Common myeloid progenitor, CD34-positive (primary cell): ENCODE measurements at regions of chr12 and their contacts with region 1.

Region 1: DNA sequence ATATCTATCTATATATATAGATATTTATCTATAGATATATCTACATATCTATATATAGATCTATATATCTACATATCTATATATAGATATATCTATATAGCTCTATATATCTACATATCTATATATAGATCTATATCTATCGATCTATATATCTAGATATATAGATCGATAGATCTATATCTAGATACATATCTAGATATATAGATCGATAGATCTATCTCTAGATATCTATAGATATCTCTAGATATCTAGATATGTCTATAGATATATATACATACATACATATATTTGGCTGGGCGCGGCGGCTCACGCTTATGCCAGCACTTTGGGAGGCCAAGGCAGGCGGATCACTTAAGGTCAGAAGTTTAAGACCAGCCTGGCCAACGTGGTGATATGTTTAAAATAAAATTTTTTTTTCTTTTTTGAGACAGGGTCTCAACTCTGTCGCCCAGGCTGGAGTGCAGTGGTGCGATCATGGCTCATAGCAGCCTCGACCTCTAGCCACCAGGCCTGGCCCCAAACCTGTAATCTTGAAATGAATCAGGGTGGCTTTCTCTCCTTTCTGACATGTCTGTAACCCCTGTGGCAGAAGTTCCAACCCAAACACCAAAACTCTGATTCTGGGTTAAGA is 18.1 kb downstream of the ARPC3 start:
- DNase-seq: no peak
- H3K4me3 ChIP-seq: peak overlapping the region in 3 of 7 experiments; percentile 63 to 74 (median 68)
- H3K27ac ChIP-seq: peak overlapping the region in 1 of 2 experiments; percentile 71
- H3K4me1 ChIP-seq: peaks cover 0 to 3% (median 0%) of the 10 kb centered on the region in 4 experiments
- H3K27me3 ChIP-seq: no peaks in the 10 kb centered on the region

Region 2: DNA sequence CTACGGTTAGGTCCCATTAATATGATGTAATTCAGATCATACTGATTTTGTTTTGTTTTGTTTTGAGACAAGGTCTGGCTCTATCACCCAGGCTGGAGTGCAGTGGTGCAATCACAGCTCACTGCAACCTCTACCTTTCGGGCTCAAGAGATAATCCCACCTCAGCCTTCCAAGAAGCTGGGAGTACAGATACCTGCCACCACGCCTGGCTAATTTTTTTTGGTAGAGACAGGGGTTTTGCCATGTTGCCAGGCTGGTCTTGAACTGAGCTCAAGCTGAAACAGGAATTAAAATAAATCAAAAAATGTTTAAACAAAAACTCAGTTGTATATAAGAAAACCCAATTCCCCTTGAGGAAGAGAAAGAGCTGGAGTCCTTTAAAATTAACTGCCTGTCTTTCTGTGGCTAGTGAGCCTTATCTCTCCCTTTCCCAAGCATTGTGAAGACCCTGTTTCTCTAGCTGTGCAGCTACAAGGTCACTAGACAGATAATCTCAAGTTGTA is 10.9 kb before region 1 on chr12:
- CTCF ChIA-PET with region 1: interaction called, 20 read pairs
- POLR2A ChIA-PET with region 1: interaction called, 5 read pairs
- DNase-seq: no peak
- H3K4me3 ChIP-seq: no peak overlapping the region
- H3K27ac ChIP-seq: no peak overlapping the region
- H3K4me1 ChIP-seq: peaks cover 0 to 13% (median 2%) of the 10 kb centered on the region in 4 experiments
- H3K27me3 ChIP-seq: no peaks in the 10 kb centered on the region